B cell (primary cell): ENCODE measurements at regions of chr2 and their contacts with region 1.

Region 1: GRCh38 chr2:232550354-232551249 is at the starts of genes EIF4E2 and TIGD1:
- DNase-seq: peak; percentile 93
- ATAC-seq: peak; percentile 84
- H3K4me3 ChIP-seq: peak within 1 kb of the TSS; percentile 73 to 92 (median 86)
- H3K4me3 Mint-ChIP-seq: peak within 1 kb of the TSS; percentile 95
- H3K27ac ChIP-seq: peak within 1 kb of the TSS; percentile 91 to 96
- H3K27ac Mint-ChIP-seq: peak within 1 kb of the TSS; percentile 96
- H3K4me1 ChIP-seq: peaks cover 14 to 38% of the 10 kb centered on the region in 2 donors
- H3K4me1 Mint-ChIP-seq: peaks cover 70% of the 10 kb centered on the region
- H3K27me3 ChIP-seq: no peaks in the 10 kb centered on the region
- H3K27me3 Mint-ChIP-seq: no peaks in the 10 kb centered on the region
- CTCF ChIP-seq: peak; percentile 52
- total RNA-seq, gene EIF4E2: 66.7 and 67.0 TPM in 2 replicates
- total RNA-seq, gene TIGD1: 13.6 and 14.7 TPM in 2 replicates

Region 2: GRCh38 chr2:231056453-231057424 is 1493.9 kb before region 1 on chr2 and contains the start of gene PSMD1:
- CTCF ChIA-PET with region 1: no interaction called
- POLR2A ChIA-PET with region 1: no interaction called
- intact Hi-C with region 1: loop called (anchors 10 kb)
- DNase-seq: peak; percentile 98
- ATAC-seq: peak; percentile 87
- H3K4me3 ChIP-seq: peak within 1 kb of the TSS; percentile 75 to 99 (median 90)
- H3K4me3 Mint-ChIP-seq: peak within 1 kb of the TSS; percentile 100
- H3K27ac ChIP-seq: peak within 1 kb of the TSS; percentile 85 to 86
- H3K27ac Mint-ChIP-seq: peak within 1 kb of the TSS; percentile 100
- H3K4me1 ChIP-seq: peaks cover 22 to 27% of the 10 kb centered on the region in 2 donors
- H3K4me1 Mint-ChIP-seq: peaks cover 39% of the 10 kb centered on the region
- H3K27me3 ChIP-seq: peaks cover 0 to 6% (median 0%) of the 10 kb centered on the region in 4 experiments
- H3K27me3 Mint-ChIP-seq: peaks cover 16% of the 10 kb centered on the region
- CTCF ChIP-seq: peak; percentile 91
- total RNA-seq, gene PSMD1: 45.4 and 48.2 TPM in 2 replicates

Region 3: DNA sequence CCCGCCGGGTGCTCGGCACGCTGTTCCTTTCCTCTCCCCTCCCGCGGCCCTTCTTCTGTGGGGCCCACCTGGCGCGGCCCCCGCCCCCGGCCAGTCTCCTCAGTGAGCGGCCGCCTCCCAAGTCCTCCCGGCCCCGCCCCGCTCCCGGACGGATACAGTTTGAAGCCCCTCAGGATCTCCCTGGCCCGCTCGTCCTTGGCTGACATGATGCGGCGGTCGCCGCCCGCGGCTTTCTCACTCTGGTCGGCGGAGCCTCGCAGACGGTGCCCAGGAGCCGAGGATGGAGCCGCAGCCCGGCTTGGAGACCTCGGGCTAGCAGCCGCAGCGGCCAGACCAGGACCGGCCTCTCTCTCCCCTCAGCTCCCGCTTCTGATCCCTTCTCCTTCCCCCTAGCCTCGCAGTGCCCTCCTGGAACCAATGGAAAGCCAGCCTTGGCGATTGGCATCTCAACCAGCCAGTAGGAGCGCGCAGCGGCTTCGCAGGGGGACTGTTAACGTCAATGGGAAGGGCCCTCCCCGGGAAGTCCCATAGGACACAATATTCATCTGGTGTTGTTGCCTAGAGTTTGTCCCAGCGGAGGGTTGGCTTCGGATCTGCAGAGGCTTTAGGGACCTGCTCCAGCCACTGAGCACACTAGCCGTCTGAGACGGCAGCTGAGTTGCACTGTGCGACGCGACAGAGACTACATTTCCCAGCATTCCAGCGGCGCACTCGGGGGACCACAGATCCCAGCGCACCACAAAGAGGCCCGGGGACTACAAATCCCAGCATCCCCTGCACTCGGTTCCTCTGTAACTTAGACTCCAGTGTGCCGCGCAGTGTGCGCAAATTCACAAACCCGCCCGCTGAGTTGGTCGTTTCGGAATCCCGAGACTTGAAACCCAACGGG is 769.4 kb before region 1 on chr2 and contains the start of gene PDE6D:
- CTCF ChIA-PET with region 1: no interaction called
- POLR2A ChIA-PET with region 1: no interaction called
- intact Hi-C with region 1: loop called (anchors 2 kb)
- DNase-seq: peak; percentile 98
- ATAC-seq: peak; percentile 89
- H3K4me3 ChIP-seq: peak within 1 kb of the TSS; percentile 72 to 92 (median 85)
- H3K4me3 Mint-ChIP-seq: peak within 1 kb of the TSS; percentile 100
- H3K27ac ChIP-seq: peak within 1 kb of the TSS; percentile 63 to 87
- H3K27ac Mint-ChIP-seq: peak within 1 kb of the TSS; percentile 97
- H3K4me1 ChIP-seq: peaks cover 28 to 32% of the 10 kb centered on the region in 2 donors
- H3K4me1 Mint-ChIP-seq: peaks cover 63% of the 10 kb centered on the region
- H3K27me3 ChIP-seq: no peaks in the 10 kb centered on the region
- H3K27me3 Mint-ChIP-seq: no peaks in the 10 kb centered on the region
- CTCF ChIP-seq: no peak
- total RNA-seq, gene PDE6D: 31.9 and 40.8 TPM in 2 replicates

Region 4: DNA sequence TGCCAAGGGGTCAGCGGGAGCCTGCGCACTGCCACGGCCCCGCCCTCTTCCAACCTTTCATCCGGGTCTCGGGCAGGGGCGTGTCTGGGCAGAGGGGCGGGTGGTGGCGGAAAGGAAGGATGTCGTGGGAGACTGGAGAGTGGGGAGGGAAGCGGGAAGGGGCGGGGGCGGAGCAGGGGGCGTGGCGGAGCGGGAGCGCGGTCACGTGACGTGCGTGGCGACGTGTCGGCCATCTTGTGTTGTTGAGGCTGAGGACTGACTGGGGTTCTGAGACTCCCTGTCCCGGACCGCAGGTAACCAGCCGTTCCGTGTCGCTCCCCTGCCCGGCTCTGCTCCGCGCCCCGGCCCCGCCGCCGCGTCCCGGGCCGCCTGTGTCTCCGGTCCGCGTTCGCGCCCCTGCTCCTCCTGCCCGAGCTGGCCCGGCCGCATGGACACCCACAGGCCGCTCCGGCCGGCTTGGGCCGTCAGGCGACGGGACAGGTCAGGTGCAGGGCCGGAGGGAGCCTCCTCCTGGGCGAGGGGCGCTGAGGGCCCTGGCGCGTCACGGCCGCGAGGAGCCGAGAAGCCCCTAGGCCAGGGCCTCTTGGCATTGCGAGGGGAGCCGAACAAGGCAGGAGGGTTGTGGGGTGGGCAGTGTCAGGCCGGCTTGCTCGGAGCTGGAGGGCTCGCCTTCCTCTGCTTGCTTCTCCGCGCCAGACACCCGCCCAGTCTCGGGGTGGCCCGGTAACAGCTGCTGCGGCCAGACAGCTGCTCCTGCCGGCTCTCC is 146.7 kb after region 1 on chr2 and contains the start of gene GIGYF2:
- CTCF ChIA-PET with region 1: no interaction called
- POLR2A ChIA-PET with region 1: no interaction called
- intact Hi-C with region 1: loop called (anchors 2 kb)
- DNase-seq: peak; percentile 92
- ATAC-seq: peak; percentile 90
- H3K4me3 ChIP-seq: peak within 1 kb of the TSS; percentile 68 to 91 (median 84)
- H3K4me3 Mint-ChIP-seq: peak within 1 kb of the TSS; percentile 95
- H3K27ac ChIP-seq: peak within 1 kb of the TSS; percentile 60 to 92
- H3K27ac Mint-ChIP-seq: peak within 1 kb of the TSS; percentile 86
- H3K4me1 ChIP-seq: peaks cover 19 to 23% of the 10 kb centered on the region in 2 donors
- H3K4me1 Mint-ChIP-seq: peaks cover 38% of the 10 kb centered on the region
- H3K27me3 ChIP-seq: no peaks in the 10 kb centered on the region
- H3K27me3 Mint-ChIP-seq: no peaks in the 10 kb centered on the region
- CTCF ChIP-seq: no peak
- total RNA-seq, gene GIGYF2: 108 and 110 TPM in 2 replicates